Activated B cell treated with CpG ODN at 0.5 μM for 24 hours (primary cell): ENCODE measurements at regions of chr11 and their contacts with region 1.

Region 1: GRCh38 chr11:65941720-65942310 is 3.5 kb upstream of the TSGA10IP start:
- DNase-seq: no peak
- ATAC-seq: no peak
- H3K4me3 Mint-ChIP-seq: no peak overlapping the region
- H3K27ac Mint-ChIP-seq: peak overlapping the region; percentile 30
- H3K4me1 Mint-ChIP-seq: peaks cover 15% of the 10 kb centered on the region
- H3K27me3 Mint-ChIP-seq: peaks cover 3% of the 10 kb centered on the region
- CTCF ChIP-seq: no peak

Region 2: GRCh38 chr11:65680192-65680743 is 261.5 kb before region 1 on chr11:
- CTCF ChIA-PET with region 1: no interaction called
- POLR2A ChIA-PET with region 1: no interaction called
- intact Hi-C with region 1: no loop called
- DNase-seq: no peak
- ATAC-seq: no peak
- H3K4me3 Mint-ChIP-seq: no peak overlapping the region
- H3K27ac Mint-ChIP-seq: no peak overlapping the region
- H3K4me1 Mint-ChIP-seq: no peaks in the 10 kb centered on the region
- H3K27me3 Mint-ChIP-seq: no peaks in the 10 kb centered on the region
- CTCF ChIP-seq: no peak

Region 3: DNA sequence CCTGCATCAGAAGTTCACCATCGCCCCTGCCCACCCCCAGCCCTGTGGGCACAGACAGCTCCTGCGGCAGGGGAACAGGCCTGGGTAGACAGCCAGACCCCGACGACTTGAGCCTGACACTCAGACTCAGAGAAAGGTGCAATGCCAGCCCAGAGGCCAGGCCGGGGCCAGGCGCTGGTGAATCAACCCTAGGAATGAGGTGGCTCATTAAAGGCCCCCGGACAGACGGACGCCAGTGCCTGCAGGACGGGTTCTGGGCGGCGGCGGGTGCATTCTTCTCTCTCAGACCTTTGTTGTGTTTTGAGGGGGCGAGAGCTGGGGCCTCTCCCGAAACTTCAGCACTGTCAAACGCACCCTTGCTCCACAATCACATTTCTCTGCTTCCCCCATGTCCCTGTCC is 149.4 kb before region 1 on chr11:
- CTCF ChIA-PET with region 1: no interaction called
- POLR2A ChIA-PET with region 1: no interaction called
- intact Hi-C with region 1: no loop called
- DNase-seq: no peak
- ATAC-seq: no peak
- H3K4me3 Mint-ChIP-seq: no peak overlapping the region
- H3K27ac Mint-ChIP-seq: peak overlapping the region; percentile 80
- H3K4me1 Mint-ChIP-seq: peaks cover 38% of the 10 kb centered on the region
- H3K27me3 Mint-ChIP-seq: peaks cover 6% of the 10 kb centered on the region
- CTCF ChIP-seq: no peak

Region 4: GRCh38 chr11:65810046-65810868 is 131.6 kb before region 1 on chr11:
- CTCF ChIA-PET with region 1: no interaction called
- POLR2A ChIA-PET with region 1: interaction called, 11 read pairs
- intact Hi-C with region 1: no loop called
- DNase-seq: no peak
- ATAC-seq: peak; percentile 34
- H3K4me3 Mint-ChIP-seq: no peak overlapping the region
- H3K27ac Mint-ChIP-seq: no peak overlapping the region
- H3K4me1 Mint-ChIP-seq: no peaks in the 10 kb centered on the region
- H3K27me3 Mint-ChIP-seq: no peaks in the 10 kb centered on the region
- CTCF ChIP-seq: no peak

Region 5: DNA sequence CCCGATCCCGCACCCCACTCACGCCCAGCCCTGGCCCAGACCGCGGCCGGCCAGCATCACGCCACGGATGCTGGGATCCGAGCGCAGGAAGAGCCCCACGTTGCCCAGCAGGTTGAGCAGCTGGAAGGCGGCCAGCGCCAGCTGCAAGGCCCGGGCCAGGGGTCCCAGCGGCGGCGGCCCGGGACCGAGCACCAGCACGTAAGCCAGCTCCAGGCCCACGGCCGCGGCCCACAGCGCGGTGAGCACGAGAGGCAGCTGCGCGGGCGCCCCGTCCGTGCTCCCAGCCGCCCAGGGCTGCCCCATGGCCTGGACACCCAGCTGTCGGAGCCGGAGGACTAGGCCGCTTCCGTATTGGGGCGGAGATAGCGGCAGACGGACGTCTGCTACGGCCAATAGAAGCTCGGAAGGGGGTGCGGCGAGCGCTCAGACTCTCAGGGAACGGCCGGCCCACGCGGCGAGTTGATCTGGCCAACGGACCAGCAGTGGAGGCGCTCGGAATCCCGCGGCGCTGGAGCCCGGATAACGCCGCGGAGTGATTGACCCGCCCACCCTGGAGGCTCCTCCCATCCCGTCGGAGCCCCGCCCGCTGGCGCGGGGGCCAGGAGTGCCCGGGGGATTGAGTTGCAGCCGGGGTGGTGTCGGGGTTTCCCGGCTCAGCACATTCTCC is 604.0 kb after region 1 on chr11 and contains the start of gene ZDHHC24:
- CTCF ChIA-PET with region 1: no interaction called
- POLR2A ChIA-PET with region 1: no interaction called
- intact Hi-C with region 1: no loop called
- DNase-seq: peak; percentile 86
- ATAC-seq: peak; percentile 85
- H3K4me3 Mint-ChIP-seq: peak within 1 kb of the TSS; percentile 77
- H3K27ac Mint-ChIP-seq: peak within 1 kb of the TSS; percentile 57
- H3K4me1 Mint-ChIP-seq: peaks cover 35% of the 10 kb centered on the region
- H3K27me3 Mint-ChIP-seq: no peaks in the 10 kb centered on the region
- CTCF ChIP-seq: no peak
- total RNA-seq, gene ZDHHC24: 14.6 and 19.0 TPM in 2 replicates